ENCODE measurements at regions of chr2 and their contacts with region 1.

Region 1: DNA sequence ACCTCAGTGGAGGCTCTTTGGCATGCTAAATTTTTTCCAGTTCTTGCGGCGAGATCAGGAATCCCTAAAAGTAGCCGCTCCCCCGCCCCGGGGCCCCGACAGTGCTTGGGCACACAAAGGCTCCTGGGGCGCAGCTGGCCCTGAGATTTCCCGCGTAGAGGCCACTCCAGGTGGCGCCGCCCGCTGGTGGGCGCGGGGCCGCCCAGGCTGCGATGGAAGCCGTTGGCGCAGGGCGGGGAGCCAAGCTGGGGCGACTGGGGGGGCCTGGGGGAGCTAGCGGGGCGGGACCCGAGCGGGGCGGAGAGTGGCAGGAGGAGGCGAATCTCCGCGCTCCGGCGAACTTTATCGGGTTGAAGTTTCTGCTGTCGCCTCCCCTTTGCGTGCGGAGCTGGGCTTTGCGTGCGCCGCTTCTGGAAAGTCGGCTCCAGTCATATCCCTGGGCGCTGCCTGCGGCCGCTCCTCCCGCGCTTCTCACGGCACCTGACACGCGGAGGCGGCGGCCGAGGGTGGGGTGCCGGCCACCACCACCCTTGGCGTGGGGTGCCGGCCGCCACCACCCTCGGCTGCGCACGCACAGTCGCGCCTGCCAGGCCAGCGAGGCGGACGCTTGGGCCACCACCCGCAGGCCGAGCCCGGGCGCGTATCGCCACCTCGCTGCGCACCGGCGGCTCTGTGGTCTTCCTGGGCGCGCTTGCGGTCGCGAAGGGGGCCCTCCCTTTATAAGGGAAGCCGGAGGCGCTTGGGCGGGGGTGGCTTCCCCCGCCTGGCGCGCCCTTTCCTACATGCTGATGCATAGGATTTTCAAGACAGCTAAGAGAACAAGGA is 867 bp upstream of the CYP1B1 start:
- DNase-seq: peak; percentile 93
- H3K4me3 Mint-ChIP-seq: peak overlapping the region; percentile 88
- H3K27ac Mint-ChIP-seq: peak overlapping the region; percentile 95
- H3K4me1 Mint-ChIP-seq: peaks cover 37% of the 10 kb centered on the region
- H3K27me3 Mint-ChIP-seq: no peaks in the 10 kb centered on the region
- CTCF ChIP-seq: peak; percentile 62

Region 2: DNA sequence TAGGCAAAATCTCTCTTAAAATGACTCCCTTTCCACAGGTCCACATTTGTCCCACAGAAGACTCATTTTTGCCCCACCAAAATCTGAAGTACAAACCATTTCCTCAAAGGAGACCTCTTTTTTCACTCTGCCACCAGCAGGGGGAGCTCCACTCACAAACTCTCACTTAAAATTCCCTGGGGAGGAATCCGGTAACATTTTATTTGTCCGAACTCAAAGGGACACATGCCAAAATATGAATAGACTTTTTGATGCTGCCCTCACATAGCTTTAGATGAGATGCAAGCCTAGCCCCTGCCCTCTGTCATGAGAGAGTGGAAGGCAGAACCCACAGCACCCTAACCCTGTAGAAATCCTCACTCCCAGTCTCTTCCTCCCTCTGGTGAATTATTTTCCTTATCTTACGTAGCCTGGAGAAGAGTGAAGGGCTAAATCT is 94.7 kb before region 1 on chr2:
- CTCF ChIA-PET with region 1: interaction called, 5 read pairs
- intact Hi-C with region 1: loop called (anchors 2 kb)
- DNase-seq: peak; percentile 77
- H3K4me3 Mint-ChIP-seq: no peak overlapping the region
- H3K27ac Mint-ChIP-seq: no peak overlapping the region
- H3K4me1 Mint-ChIP-seq: peaks cover 8% of the 10 kb centered on the region
- H3K27me3 Mint-ChIP-seq: no peaks in the 10 kb centered on the region
- CTCF ChIP-seq: peak; percentile 80

Region 3: DNA sequence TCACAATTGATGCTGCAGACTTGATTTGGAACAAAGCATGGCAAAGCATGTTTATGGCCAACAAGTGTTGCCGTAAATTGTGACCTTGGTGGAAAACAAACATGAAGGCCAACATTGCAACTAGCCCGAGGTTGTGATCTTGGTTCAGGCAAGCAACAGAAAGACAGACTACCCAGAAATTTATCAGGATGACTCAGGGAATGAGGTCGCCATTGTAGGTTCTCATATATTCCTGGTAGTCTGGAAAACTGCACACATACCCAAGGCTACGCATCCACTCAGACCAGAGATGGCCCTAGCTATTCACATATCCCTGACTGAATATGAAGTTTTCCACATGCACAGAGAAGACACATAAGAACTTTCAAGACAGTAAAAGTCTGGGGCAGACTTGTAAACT is 31.0 kb before region 1 on chr2:
- CTCF ChIA-PET with region 1: no interaction called
- intact Hi-C with region 1: no loop called
- DNase-seq: no peak
- H3K4me3 Mint-ChIP-seq: no peak overlapping the region
- H3K27ac Mint-ChIP-seq: no peak overlapping the region
- H3K4me1 Mint-ChIP-seq: no peaks in the 10 kb centered on the region
- H3K27me3 Mint-ChIP-seq: no peaks in the 10 kb centered on the region
- CTCF ChIP-seq: no peak

Region 4: DNA sequence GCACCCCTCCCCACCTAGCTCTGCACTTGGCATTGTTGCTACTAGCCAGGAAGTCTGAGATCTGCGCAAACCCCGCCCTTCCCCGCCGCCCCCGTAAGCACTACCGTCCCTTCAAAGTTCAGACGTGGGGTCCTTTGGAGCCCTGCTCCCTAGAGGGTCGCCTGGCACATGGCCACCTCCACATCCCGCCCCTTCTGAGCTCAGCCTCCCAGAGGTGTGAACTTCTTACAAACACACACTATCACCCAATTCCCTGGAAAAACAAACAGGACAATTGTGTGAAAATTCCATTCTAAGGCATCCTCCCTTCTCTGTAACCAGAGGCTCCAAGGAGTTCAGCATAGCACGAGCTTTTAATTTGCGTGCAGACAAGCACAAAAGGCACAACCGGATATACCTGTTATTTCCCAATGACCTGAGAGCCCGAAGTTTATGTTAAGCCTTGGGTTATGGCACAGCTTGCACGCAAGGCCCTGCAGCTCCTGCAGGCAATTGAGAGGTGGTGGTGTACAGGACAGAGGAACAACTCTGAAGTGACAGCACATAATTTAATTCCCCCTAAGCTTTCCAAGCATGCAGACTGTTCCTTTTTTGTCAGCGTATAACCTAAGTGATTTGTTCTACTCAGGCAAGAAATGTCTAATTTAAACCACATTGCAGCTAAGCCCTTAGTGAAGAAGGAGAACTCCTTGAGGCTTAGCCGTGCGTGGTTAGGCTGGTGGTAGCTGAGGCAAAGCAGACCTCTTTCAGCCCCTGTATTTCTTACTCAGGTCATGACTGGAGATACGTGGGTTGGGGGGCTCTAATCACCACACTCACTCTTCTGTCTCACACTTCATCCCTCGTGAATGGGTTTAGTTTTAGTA is 19.4 kb after region 1 on chr2:
- CTCF ChIA-PET with region 1: interaction called, 33 read pairs
- intact Hi-C with region 1: loop called (anchors 2 kb)
- DNase-seq: peak; percentile 79
- H3K4me3 Mint-ChIP-seq: peak overlapping the region; percentile 49
- H3K27ac Mint-ChIP-seq: peak overlapping the region; percentile 88
- H3K4me1 Mint-ChIP-seq: peaks cover 66% of the 10 kb centered on the region
- H3K27me3 Mint-ChIP-seq: no peaks in the 10 kb centered on the region
- CTCF ChIP-seq: no peak

Region 5: GRCh38 chr2:38115216-38116032 is 38.6 kb after region 1 on chr2:
- CTCF ChIA-PET with region 1: interaction called, 43 read pairs
- intact Hi-C with region 1: loop called (anchors 1 kb)
- DNase-seq: peak; percentile 89
- H3K4me3 Mint-ChIP-seq: no peak overlapping the region
- H3K27ac Mint-ChIP-seq: no peak overlapping the region
- H3K4me1 Mint-ChIP-seq: peaks cover 66% of the 10 kb centered on the region
- H3K27me3 Mint-ChIP-seq: no peaks in the 10 kb centered on the region
- CTCF ChIP-seq: peak; percentile 88

Region 6: DNA sequence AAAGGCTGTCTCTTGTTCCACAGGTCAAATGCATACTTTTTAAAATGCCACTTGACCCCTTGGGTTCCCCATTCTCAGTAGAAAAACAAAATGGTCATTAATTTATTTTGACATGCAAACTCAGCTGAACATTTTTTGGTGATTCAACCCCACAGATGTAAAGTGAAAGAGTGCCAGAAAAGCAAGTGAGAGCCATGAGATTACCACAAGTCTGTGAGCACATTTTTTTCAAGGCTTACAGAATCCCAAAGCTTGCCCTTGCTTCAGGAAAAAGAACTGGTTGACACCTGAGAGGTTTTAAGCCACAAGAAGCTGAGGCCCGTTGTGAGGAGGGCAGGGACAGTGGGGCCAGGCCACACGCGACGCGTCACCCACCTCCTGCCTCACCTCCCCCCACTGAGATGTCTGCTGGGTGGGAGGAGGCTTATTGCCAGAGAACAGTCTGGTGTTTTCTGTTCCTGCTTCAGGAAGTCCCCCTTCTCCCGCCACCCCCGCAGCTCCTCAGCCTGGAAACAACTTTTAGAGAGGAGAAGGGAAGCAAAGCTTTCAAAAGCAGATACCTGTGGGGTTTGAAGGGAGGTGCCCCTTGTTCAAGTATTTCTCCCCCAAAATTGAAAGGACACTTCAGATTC is 69.6 kb after region 1 on chr2:
- CTCF ChIA-PET with region 1: interaction called, 10 read pairs
- intact Hi-C with region 1: no loop called
- DNase-seq: peak; percentile 49
- H3K4me3 Mint-ChIP-seq: peak overlapping the region; percentile 19
- H3K27ac Mint-ChIP-seq: peak overlapping the region; percentile 80
- H3K4me1 Mint-ChIP-seq: peaks cover 27% of the 10 kb centered on the region
- H3K27me3 Mint-ChIP-seq: no peaks in the 10 kb centered on the region
- CTCF ChIP-seq: no peak

Region 7: DNA sequence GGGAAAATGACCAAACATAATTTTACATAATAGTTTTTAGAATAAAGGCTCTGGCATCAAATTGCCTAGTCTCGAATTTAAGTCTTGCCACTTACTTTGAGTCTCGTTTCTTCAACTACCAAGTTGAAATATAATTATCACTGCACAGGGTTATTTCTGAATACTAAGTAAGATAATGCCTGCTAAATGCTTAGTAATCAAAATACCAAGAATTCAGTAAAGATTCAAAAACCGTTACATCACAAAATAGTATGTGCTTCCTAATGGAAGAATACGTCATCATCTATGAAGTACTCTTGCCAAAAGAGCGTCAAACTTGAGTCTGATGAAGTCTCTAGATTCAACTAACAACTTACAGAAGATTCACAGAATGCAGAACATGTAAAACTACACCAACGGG is 259.8 kb after region 1 on chr2:
- CTCF ChIA-PET with region 1: no interaction called
- intact Hi-C with region 1: no loop called
- DNase-seq: no peak
- H3K4me3 Mint-ChIP-seq: no peak overlapping the region
- H3K27ac Mint-ChIP-seq: no peak overlapping the region
- H3K4me1 Mint-ChIP-seq: no peaks in the 10 kb centered on the region
- H3K27me3 Mint-ChIP-seq: no peaks in the 10 kb centered on the region
- CTCF ChIP-seq: no peak